ENCODE measurements at regions of chr7 and their contacts with region 1.

Region 1: GRCh38 chr7:90708841-90709317 is 112.8 kb downstream of the CDK14 start:
- DNase-seq: peak; percentile 67
- ATAC-seq: peak; percentile 11; the same call in 1 of the 2 replicates
- H3K4me3 ChIP-seq: no peak overlapping the region
- H3K27ac ChIP-seq: no peak overlapping the region
- H3K4me1 ChIP-seq: peaks cover 18% of the 10 kb centered on the region
- H3K27me3 ChIP-seq: no peaks in the 10 kb centered on the region
- CTCF ChIP-seq: peak; percentile 87

Region 2: GRCh38 chr7:90520484-90520883 is 188.4 kb before region 1 on chr7:
- CTCF ChIA-PET with region 1: no interaction called
- POLR2A ChIA-PET with region 1: no interaction called
- intact Hi-C with region 1: no loop called
- DNase-seq: peak; percentile 20
- ATAC-seq: no peak
- H3K4me3 ChIP-seq: no peak overlapping the region
- H3K27ac ChIP-seq: no peak overlapping the region
- H3K4me1 ChIP-seq: peaks cover 8% of the 10 kb centered on the region
- H3K27me3 ChIP-seq: no peaks in the 10 kb centered on the region
- CTCF ChIP-seq: peak; percentile 64

Region 3: GRCh38 chr7:90824386-90825307 is 115.8 kb after region 1 on chr7:
- CTCF ChIA-PET with region 1: no interaction called
- POLR2A ChIA-PET with region 1: no interaction called
- intact Hi-C with region 1: loop called (anchors 5 kb)
- DNase-seq: peak; percentile 97
- ATAC-seq: peak; percentile 91
- H3K4me3 ChIP-seq: peak overlapping the region; percentile 26; the same call in 1 of the 2 replicates
- H3K27ac ChIP-seq: peak overlapping the region; percentile 95
- H3K4me1 ChIP-seq: peaks cover 42% of the 10 kb centered on the region
- H3K27me3 ChIP-seq: no peaks in the 10 kb centered on the region
- CTCF ChIP-seq: no peak

Region 4: GRCh38 chr7:91140984-91141383 is 432.1 kb after region 1 on chr7:
- CTCF ChIA-PET with region 1: no interaction called
- POLR2A ChIA-PET with region 1: no interaction called
- intact Hi-C with region 1: no loop called
- DNase-seq: no peak
- ATAC-seq: no peak
- H3K4me3 ChIP-seq: no peak overlapping the region
- H3K27ac ChIP-seq: no peak overlapping the region
- H3K4me1 ChIP-seq: peaks cover 11% of the 10 kb centered on the region
- H3K27me3 ChIP-seq: no peaks in the 10 kb centered on the region
- CTCF ChIP-seq: no peak

Measured in PC-3 (cell line).